Activated T-helper 1 cell treated with anti-CD3 and anti-CD28 coated beads, Interleukin-12 subunit alpha, Interleukin-12 subunit beta, Interleukin-2, Interleukin-4 antibody, amounts not matched to agents 30 ng/mL and 10 ng/mL and 1 ng/mL, durations not matched to agents 14 hours and 24 hours and 36 hours (primary cell): ENCODE measurements at regions of chr9 and their contacts with region 1.

Region 1: DNA sequence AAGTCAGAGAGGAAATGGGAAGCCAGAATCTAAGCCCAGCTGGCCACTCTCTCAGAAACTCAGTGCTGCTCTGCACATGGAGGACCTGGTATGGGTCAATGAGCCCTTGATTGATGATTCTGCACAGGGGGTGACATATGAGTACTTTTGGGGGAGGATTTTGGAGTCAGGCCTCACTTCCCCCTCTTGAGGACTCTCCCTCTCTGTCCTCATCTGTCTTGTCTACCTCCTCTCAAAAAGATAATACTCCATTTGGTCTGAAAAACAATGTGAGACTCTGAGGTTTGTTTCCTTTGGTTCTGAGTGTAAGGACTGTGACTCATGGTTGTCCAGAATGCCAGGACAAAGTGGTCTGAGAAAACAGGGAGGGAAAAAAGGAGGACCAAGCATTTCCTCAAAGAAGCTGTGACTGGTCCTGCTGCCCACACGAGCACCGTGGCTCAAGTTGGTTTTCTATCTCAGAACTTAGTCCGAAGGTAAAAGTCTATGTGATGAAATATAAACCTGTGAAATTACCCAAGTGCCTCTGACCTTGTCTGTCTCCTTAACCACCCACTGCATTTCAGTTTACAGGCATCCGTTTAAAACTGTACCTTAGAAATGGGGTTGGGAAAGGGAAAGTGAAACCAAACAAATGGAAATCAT is 11.1 kb downstream of the TTC39B start:
- DNase-seq: no peak
- H3K4me3 Mint-ChIP-seq: peak overlapping the region; percentile 79
- H3K27ac Mint-ChIP-seq: peak overlapping the region; percentile 97
- H3K4me1 Mint-ChIP-seq: peaks cover 84% of the 10 kb centered on the region
- H3K27me3 Mint-ChIP-seq: no peaks in the 10 kb centered on the region

Region 2: DNA sequence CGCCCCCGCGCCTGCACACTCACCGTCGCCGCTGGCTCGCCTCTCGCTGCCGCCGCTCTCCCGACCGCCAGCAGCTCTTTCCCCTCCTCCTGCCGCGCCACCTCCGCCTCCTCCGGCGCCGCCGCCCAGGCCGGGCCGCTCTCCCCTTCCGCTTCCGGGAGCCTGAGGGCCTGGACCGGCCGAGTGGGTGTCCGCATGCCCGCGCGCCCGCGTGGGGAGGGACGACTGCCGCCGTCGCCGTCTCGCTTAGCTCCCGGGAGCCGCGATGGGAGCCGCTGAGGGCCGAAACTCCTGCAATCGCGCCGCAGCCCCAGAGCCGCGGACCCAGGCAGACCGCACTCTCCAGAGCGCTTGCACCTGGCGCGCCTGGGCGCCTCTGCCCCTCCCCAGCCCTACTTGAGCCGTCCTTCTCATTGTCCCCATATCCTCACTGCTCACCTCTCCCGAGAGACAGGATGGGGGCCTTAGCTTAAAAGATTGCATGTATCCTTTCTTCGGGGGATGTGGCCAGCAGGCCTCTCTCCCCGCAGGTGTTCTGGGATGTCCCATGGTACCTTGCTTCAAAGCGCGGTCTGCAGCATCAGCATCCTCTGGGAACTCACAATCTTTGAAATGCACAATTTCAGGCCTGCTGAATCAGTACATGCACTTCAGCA is 602.5 kb before region 1 on chr9 and contains the start of gene ZDHHC21:
- intact Hi-C with region 1: loop called (anchors 10 kb)
- DNase-seq: peak; percentile 53
- H3K4me3 Mint-ChIP-seq: peak within 1 kb of the TSS; percentile 97
- H3K27ac Mint-ChIP-seq: peak within 1 kb of the TSS; percentile 97
- H3K4me1 Mint-ChIP-seq: peaks cover 43% of the 10 kb centered on the region
- H3K27me3 Mint-ChIP-seq: peaks cover 12% of the 10 kb centered on the region
- total RNA-seq, gene ZDHHC21: 12.7 and 13.7 TPM in 2 replicates

Region 3: GRCh38 chr9:14993061-14993800 is 302.7 kb before region 1 on chr9:
- intact Hi-C with region 1: loop called (anchors 10 kb)
- DNase-seq: peak; percentile 32
- H3K4me3 Mint-ChIP-seq: peak overlapping the region; percentile 73
- H3K27ac Mint-ChIP-seq: peak overlapping the region; percentile 41
- H3K4me1 Mint-ChIP-seq: peaks cover 39% of the 10 kb centered on the region
- H3K27me3 Mint-ChIP-seq: peaks cover 2% of the 10 kb centered on the region

Region 4: DNA sequence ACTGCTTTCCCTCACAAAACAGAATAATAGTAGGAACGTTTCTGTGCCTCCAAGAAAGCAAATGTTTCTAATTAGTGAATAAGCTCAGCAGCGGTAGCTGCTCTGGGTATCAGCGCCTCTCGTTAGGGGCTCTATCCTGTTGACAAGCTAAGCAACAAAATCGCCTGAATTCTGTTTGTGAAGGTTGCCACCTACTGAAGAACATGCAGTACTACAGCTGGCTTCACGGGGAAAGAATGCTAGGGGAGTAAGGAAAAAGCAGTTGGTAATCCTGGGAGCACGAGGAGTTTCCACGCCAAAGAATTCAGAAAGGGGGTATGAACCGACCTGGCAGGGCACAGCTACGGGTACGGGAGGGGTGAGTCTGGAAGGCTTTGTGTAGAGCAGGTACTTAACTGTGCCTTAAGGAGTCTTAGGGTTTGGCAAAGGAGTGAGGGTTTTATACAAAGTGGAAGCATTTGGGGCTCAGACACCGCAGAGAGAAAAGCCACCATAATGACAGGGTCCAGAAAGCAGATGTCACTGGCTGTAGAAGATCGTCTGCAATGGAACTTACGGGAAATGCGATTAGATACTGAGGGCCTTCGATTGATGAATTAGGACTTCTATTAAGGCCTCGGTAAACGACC is 160.6 kb before region 1 on chr9:
- intact Hi-C with region 1: no loop called
- DNase-seq: peak; percentile 43
- H3K4me3 Mint-ChIP-seq: no peak overlapping the region
- H3K27ac Mint-ChIP-seq: no peak overlapping the region
- H3K4me1 Mint-ChIP-seq: peaks cover 6% of the 10 kb centered on the region
- H3K27me3 Mint-ChIP-seq: peaks cover 5% of the 10 kb centered on the region

Region 5: DNA sequence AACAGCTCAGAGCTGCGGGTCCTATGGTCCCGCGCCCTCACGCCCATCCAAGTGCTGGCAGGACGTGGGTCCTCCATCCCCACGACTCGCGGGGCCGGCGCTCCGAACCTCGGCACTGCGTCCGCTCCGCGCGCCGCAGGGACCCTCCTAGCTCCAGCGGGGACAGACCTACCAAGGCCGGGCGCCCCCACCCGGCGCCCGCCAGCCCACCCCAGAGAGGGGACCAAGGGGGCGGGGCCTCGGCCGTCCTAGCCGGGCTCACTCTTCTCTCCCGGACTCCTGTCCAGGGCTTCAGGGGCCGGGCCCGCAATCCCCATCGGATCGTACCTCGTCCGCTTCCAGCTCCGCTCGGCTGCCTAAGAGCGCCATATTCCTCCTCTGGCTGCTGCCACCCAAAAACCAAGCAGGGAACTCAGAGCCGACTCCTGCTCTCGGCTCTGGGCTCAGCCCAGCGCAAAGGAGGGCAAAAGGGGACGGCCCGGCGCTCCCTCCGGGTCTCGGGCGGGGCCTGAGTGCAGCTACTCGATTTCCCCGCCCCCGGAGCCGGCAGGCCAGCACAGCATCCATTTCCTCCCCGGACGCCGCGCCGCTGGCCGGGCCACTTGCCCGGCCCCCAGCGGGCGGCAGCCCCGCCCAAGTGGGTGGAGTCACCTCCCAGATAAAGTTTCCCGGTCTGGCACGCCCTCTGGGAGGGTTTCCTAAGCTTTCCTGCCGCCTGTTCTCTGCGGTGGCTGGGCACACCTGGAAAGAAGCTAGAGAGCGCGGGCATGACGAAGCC is 11.1 kb after region 1 on chr9 and contains the start of gene TTC39B:
- intact Hi-C with region 1: loop called (anchors 1 kb)
- DNase-seq: peak; percentile 82
- H3K4me3 Mint-ChIP-seq: peak within 1 kb of the TSS; percentile 98
- H3K27ac Mint-ChIP-seq: peak within 1 kb of the TSS; percentile 95
- H3K4me1 Mint-ChIP-seq: peaks cover 57% of the 10 kb centered on the region
- H3K27me3 Mint-ChIP-seq: no peaks in the 10 kb centered on the region
- total RNA-seq, gene TTC39B: 23.8 and 26.1 TPM in 2 replicates

Region 6: DNA sequence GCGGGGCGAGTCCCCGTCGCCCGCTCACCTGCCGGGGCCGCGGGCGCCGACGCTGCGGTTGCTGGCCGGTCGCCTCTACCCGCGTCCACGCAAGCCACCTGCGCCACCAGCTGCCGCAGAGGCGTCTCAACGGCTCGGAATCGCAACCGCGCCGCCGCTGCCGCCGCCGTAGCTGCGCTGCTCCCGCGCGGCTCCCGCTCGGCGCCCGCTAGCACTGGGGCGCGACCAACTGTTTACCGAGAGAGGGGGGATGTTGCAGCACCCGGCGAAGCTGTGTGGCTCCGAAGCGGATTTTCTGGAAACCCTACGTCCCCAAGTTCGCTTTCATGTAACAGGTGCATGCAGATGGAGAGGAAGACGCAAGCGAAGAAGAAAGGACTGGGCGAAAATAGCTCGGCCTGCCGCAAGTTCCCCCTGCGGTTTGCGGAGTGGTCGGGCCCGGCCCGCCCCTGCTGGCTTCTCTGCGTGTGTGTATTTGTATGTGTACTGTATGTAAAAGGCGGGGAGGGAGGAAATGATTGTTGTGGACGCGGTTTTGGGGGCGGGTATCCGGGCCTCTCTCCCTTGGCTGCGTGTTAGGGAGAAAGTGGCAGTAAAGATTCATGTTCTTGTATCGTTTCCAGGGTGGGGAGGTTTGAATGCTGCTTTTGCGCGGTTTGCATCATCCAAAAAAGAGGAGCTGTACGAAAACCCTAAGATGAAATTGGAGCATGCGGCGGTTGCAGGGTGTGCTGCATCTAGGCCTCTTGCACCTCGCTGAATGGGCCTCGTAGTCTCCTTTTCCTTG is 215.1 kb after region 1 on chr9 and contains the start of gene PSIP1:
- intact Hi-C with region 1: loop called (anchors 1 kb)
- DNase-seq: peak; percentile 84
- H3K4me3 Mint-ChIP-seq: peak within 1 kb of the TSS; percentile 96
- H3K27ac Mint-ChIP-seq: peak within 1 kb of the TSS; percentile 100
- H3K4me1 Mint-ChIP-seq: peaks cover 52% of the 10 kb centered on the region
- H3K27me3 Mint-ChIP-seq: peaks cover 4% of the 10 kb centered on the region
- total RNA-seq, gene PSIP1: 90.6 and 95.3 TPM in 2 replicates